ENCODE measurements at regions of chr5 and their contacts with region 1.

Region 1: GRCh38 chr5:73201547-73202513 is 28.8 kb downstream of the TMEM174 start:
- DNase-seq: peak; percentile 81
- H3K4me3 Mint-ChIP-seq: no peak overlapping the region
- H3K27ac Mint-ChIP-seq: no peak overlapping the region
- H3K4me1 Mint-ChIP-seq: peaks cover 3% of the 10 kb centered on the region
- H3K27me3 Mint-ChIP-seq: peaks cover 59% of the 10 kb centered on the region

Region 2: GRCh38 chr5:72920690-72921502 is 280.9 kb before region 1 on chr5:
- CTCF ChIA-PET with region 1: no interaction called
- POLR2A ChIA-PET with region 1: no interaction called
- intact Hi-C with region 1: loop called (anchors 2 kb)
- DNase-seq: no peak
- H3K4me3 Mint-ChIP-seq: no peak overlapping the region
- H3K27ac Mint-ChIP-seq: no peak overlapping the region
- H3K4me1 Mint-ChIP-seq: no peaks in the 10 kb centered on the region
- H3K27me3 Mint-ChIP-seq: no peaks in the 10 kb centered on the region

Region 3: DNA sequence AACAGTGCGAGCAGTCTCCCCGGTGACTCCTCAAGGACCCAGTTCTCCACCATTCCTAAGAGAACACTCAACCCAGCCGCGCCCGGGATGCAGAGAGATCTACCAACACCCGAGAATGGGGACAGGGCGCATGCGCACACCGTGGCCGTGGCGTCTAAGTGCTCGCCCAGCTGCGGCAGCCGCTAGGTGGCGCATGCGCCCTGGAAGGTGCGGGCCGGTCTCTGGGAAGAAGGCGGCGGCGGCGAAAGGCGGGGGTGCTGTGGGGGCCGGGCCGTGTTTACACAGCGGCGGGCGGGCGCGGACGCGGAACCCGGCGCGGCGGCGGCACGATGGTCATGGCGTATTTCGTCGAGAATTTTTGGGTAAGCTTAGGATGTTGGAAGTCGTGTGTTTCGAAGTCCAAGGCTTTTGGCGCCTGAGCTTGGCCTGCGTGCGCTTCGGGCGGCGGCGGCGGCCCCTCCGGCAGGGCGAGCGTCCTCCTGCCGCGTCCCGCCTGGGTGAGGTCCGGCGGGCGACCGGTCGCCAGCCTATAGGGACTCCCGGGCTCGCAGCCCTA is 246.0 kb before region 1 on chr5 and contains the start of gene FCHO2:
- CTCF ChIA-PET with region 1: interaction called, 3 read pairs
- POLR2A ChIA-PET with region 1: no interaction called
- intact Hi-C with region 1: loop called (anchors 2 kb)
- DNase-seq: peak; percentile 95
- H3K4me3 Mint-ChIP-seq: peak within 1 kb of the TSS; percentile 87
- H3K27ac Mint-ChIP-seq: peak within 1 kb of the TSS; percentile 49
- H3K4me1 Mint-ChIP-seq: peaks cover 14% of the 10 kb centered on the region
- H3K27me3 Mint-ChIP-seq: peaks cover 43% of the 10 kb centered on the region
- total RNA-seq, gene FCHO2: 1.3 TPM

Region 4: DNA sequence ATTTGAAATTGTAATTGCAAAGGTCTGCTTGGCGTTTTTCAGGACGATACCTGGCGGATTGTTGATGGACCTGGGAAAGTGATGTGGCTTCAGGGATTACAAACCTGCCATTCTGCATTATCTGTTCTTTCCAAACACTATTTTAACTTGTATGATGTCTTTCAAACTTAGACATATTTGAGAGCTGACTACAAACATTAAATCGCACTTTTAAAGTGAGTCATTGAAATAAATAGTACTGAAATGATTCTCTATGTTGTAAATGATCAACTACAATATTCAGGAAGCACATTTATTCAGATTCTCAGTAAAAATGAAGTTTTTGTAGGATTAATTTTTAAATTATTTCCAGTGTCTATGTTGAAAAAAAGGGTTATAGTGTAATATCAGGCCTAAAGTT is 113.8 kb before region 1 on chr5:
- CTCF ChIA-PET with region 1: interaction called, 13 read pairs
- POLR2A ChIA-PET with region 1: no interaction called
- intact Hi-C with region 1: loop called (anchors 1 kb)
- DNase-seq: no peak
- H3K4me3 Mint-ChIP-seq: no peak overlapping the region
- H3K27ac Mint-ChIP-seq: no peak overlapping the region
- H3K4me1 Mint-ChIP-seq: no peaks in the 10 kb centered on the region
- H3K27me3 Mint-ChIP-seq: peaks cover 3% of the 10 kb centered on the region

Region 5: DNA sequence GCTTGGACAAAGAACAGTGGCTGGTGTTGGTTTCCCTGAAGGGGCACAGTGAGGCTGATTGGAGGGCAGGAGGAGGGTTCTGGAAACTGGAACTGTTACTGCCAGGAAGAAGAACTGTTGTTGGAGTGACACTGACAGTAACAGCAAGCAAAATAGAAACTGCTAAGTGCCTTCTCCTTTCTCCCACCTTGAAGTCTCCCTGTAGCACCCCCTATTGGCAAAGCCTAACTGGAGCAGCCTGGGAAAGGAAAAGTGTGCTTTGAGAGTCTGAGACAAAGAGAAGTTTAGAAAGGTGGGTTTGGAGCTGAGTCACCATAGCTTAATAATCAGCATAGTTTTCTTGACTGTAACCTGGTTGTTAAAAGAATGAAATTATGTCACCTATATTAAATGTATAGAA is 31.3 kb before region 1 on chr5:
- CTCF ChIA-PET with region 1: interaction called, 11 read pairs
- POLR2A ChIA-PET with region 1: no interaction called
- intact Hi-C with region 1: no loop called
- DNase-seq: peak; percentile 43
- H3K4me3 Mint-ChIP-seq: no peak overlapping the region
- H3K27ac Mint-ChIP-seq: no peak overlapping the region
- H3K4me1 Mint-ChIP-seq: no peaks in the 10 kb centered on the region
- H3K27me3 Mint-ChIP-seq: peaks cover 88% of the 10 kb centered on the region

Measured in activated CD4-positive, alpha-beta memory T cell treated with anti-CD3 and anti-CD28 coated beads for 36 hours (primary cell).